ENCODE measurements at regions of chr1 and their contacts with region 1.

Region 1: GRCh38 chr1:200510228-200510623 is 100.4 kb upstream of the ZNF281 start:
- DNase-seq: peak; percentile 60
- H3K4me3 ChIP-seq: no peak overlapping the region
- H3K27ac ChIP-seq: no peak overlapping the region
- H3K4me1 ChIP-seq: no peaks in the 10 kb centered on the region
- H3K27me3 ChIP-seq: peaks cover 3% of the 10 kb centered on the region
- CTCF ChIP-seq: peak; percentile 90 to 95

Region 2: GRCh38 chr1:199545780-199546179 is 964.4 kb before region 1 on chr1:
- CTCF ChIA-PET with region 1: no interaction called
- dilution Hi-C with region 1: no loop called
- in situ Hi-C with region 1: no loop called
- intact Hi-C with region 1: loop called (anchors 1 kb)
- DNase-seq: peak; percentile 30
- H3K4me3 ChIP-seq: no peak overlapping the region
- H3K27ac ChIP-seq: no peak overlapping the region
- H3K4me1 ChIP-seq: no peaks in the 10 kb centered on the region
- H3K27me3 ChIP-seq: peaks cover 6% of the 10 kb centered on the region
- CTCF ChIP-seq: peak; percentile 38 to 55

Region 3: GRCh38 chr1:200090252-200091096 is 419.8 kb before region 1 on chr1:
- CTCF ChIA-PET with region 1: no interaction called
- dilution Hi-C with region 1: no loop called
- in situ Hi-C with region 1: no loop called
- intact Hi-C with region 1: loop called (anchors 5 kb)
- DNase-seq: peak; percentile 18
- H3K4me3 ChIP-seq: no peak overlapping the region
- H3K27ac ChIP-seq: no peak overlapping the region
- H3K4me1 ChIP-seq: peaks cover 4% of the 10 kb centered on the region
- H3K27me3 ChIP-seq: no peaks in the 10 kb centered on the region
- CTCF ChIP-seq: peak; percentile 24 to 37

Region 4: DNA sequence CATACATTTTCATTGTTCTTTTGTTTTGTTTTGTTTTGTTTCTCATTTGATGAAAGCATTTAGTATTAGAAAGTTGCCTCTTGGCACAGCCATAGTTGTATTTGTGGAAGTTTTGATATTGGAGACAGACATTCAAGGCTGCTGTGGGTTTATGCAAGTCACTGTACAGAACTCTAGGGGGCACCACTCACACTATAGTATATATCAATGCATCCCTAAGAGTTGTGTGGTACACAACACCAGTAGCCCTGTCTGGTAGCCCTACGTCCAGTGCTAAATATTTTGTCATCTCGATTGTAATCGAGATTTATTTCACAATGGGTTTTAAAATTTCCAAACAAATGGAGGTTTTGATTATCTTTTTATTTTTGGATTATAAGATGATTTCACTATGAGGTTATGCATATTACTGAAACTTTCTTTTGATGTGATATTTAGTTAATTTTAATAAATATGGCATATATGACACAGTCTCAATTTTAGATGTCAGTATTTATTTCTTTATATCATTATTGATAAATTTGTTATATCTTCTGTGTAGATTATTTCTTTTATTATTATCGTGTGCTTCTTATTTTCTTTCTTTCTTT is 370.5 kb before region 1 on chr1:
- CTCF ChIA-PET with region 1: no interaction called
- dilution Hi-C with region 1: no loop called
- in situ Hi-C with region 1: no loop called
- intact Hi-C with region 1: loop called (anchors 1 kb)
- DNase-seq: peak; percentile 32
- H3K4me3 ChIP-seq: no peak overlapping the region
- H3K27ac ChIP-seq: no peak overlapping the region
- H3K4me1 ChIP-seq: no peaks in the 10 kb centered on the region
- H3K27me3 ChIP-seq: no peaks in the 10 kb centered on the region
- CTCF ChIP-seq: peak; percentile 72 to 78

Region 5: DNA sequence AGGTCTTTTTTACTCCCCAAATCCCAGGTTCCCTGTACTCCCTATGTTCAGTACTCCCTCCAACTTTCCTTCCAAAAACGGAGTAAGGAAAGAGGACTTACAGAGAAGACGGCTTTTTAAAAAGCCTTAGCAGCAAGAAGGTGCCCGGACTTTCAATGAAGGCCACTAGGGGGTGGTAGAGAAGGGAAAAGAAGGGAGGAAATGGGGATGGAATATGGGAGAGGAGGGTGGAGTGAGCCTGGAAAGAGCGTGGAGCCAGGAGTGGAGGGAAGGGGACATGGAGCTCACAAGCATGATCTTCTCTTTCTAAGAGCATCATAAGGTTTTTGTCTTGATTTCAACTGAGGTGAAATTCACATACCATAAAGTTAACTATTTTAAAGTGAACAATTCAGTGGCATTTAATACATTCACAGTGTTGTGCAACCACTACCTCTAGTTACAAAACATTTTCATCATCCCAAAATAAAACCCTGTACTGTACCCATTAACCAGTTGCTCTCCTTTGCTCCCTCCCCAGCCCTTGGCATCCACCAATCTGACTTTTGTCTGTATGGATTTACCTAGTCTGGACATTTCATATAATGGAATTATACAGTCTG is 230.3 kb before region 1 on chr1:
- CTCF ChIA-PET with region 1: no interaction called
- dilution Hi-C with region 1: no loop called
- in situ Hi-C with region 1: no loop called
- intact Hi-C with region 1: loop called (anchors 1 kb)
- DNase-seq: peak; percentile 53
- H3K4me3 ChIP-seq: no peak overlapping the region
- H3K27ac ChIP-seq: no peak overlapping the region
- H3K4me1 ChIP-seq: no peaks in the 10 kb centered on the region
- H3K27me3 ChIP-seq: no peaks in the 10 kb centered on the region
- CTCF ChIP-seq: peak; percentile 78

Region 6: DNA sequence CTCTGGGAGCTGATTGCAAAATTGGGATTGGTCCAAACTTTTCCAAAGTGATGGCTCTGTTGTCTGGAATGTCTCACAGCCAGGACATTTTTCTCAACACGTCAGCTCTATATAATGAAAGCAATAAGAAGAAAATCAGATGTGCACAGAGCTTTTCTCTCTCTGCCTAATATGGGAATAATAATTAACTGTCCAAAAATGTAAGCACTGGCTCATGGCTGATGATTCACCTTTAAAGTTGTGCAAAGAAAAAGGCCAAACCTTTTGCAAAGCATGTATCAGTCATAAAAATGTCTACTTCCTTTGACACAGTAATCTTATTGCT is 130.8 kb before region 1 on chr1:
- CTCF ChIA-PET with region 1: interaction called, 22 read pairs
- dilution Hi-C with region 1: no loop called
- in situ Hi-C with region 1: no loop called
- intact Hi-C with region 1: no loop called
- DNase-seq: peak; percentile 88
- H3K4me3 ChIP-seq: no peak overlapping the region
- H3K27ac ChIP-seq: peak overlapping the region; percentile 58
- H3K4me1 ChIP-seq: peaks cover 59% of the 10 kb centered on the region
- H3K27me3 ChIP-seq: no peaks in the 10 kb centered on the region
- CTCF ChIP-seq: no peak

Region 7: GRCh38 chr1:200488375-200489165 is 21.7 kb before region 1 on chr1:
- CTCF ChIA-PET with region 1: no interaction called
- dilution Hi-C with region 1: no loop called
- in situ Hi-C with region 1: no loop called
- intact Hi-C with region 1: loop called (anchors 1 kb)
- DNase-seq: peak; percentile 57
- H3K4me3 ChIP-seq: no peak overlapping the region
- H3K27ac ChIP-seq: no peak overlapping the region
- H3K4me1 ChIP-seq: peaks cover 14% of the 10 kb centered on the region
- H3K27me3 ChIP-seq: no peaks in the 10 kb centered on the region
- CTCF ChIP-seq: peak; percentile 82 to 86